Activated CD4-positive, alpha-beta T cell treated with anti-CD3 and anti-CD28 coated beads, Interleukin-2, amount 10 ng/mL, durations not matched to agents 7 days and 5 days (primary cell): ENCODE measurements at regions of chr15 and their contacts with region 1.

Region 1: DNA sequence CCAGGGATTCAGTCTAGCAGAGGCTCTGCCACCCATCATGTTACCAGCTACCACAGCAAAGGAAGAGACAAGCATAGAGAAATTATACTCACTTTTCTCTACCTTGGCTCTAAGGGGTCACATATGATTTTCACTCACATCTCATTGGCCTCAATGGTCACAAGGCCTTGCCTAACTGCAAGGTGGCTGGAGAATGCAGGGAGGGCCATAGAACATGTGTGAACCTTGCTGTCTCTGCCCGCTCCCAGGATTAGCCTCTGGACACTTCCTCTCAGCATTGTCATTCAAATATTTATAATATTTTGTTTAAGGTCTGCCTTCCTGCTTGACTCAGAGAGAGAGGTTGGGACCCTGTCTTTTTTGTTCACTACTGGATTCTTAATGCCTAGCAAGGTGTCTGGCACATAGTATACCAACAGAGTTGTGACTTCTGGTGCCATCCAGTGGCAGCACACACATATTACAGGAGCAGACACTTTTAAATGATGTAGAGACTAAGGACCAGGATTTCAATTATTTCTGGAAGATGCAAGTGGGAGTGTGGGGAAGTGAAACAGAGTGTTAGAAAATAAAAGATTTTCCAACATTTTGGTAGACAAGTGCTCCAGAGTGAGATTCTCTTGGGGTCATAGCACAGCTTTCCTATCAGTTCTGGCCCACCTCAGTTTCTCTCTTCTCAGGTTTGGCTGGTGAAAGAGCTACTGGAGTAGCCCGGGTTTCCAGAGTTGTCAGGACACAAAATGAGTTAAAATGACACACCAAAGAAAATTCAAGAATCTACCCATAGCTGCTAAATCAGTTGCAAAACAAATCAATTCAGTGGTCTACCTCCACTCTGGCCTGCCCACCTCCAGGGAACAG is 119.0 kb upstream of the RASGRP1 start:
- DNase-seq: peak; percentile 82
- H3K4me3 Mint-ChIP-seq: peak overlapping the region; percentile 55
- H3K27ac Mint-ChIP-seq: peak overlapping the region; percentile 95
- H3K4me1 Mint-ChIP-seq: peaks cover 81% of the 10 kb centered on the region
- H3K27me3 Mint-ChIP-seq: no peaks in the 10 kb centered on the region

Region 2: GRCh38 chr15:38660738-38661137 is 22.9 kb before region 1 on chr15:
- CTCF ChIA-PET with region 1: interaction called, 32 read pairs
- POLR2A ChIA-PET with region 1: no interaction called
- DNase-seq: peak; percentile 28
- H3K4me3 Mint-ChIP-seq: peak overlapping the region; percentile 42
- H3K27ac Mint-ChIP-seq: peak overlapping the region; percentile 85
- H3K4me1 Mint-ChIP-seq: peaks cover 80% of the 10 kb centered on the region
- H3K27me3 Mint-ChIP-seq: no peaks in the 10 kb centered on the region

Region 3: GRCh38 chr15:38745126-38745525 is 61.5 kb after region 1 on chr15:
- CTCF ChIA-PET with region 1: no interaction called
- POLR2A ChIA-PET with region 1: no interaction called
- DNase-seq: no peak
- H3K4me3 Mint-ChIP-seq: no peak overlapping the region
- H3K27ac Mint-ChIP-seq: no peak overlapping the region
- H3K4me1 Mint-ChIP-seq: no peaks in the 10 kb centered on the region
- H3K27me3 Mint-ChIP-seq: peaks cover 21% of the 10 kb centered on the region